ENCODE measurements at regions of chr14 and their contacts with region 1.

Region 1: GRCh38 chr14:77320238-77320935 is at the start of gene POMT2:
- DNase-seq: peak; percentile 92
- H3K4me3 Mint-ChIP-seq: peak within 1 kb of the TSS; percentile 92
- H3K27ac Mint-ChIP-seq: peak within 1 kb of the TSS; percentile 99
- H3K4me1 Mint-ChIP-seq: peaks cover 22% of the 10 kb centered on the region
- H3K27me3 Mint-ChIP-seq: no peaks in the 10 kb centered on the region
- total RNA-seq, gene POMT2: 20.5 and 22.1 TPM in 2 replicates

Region 2: DNA sequence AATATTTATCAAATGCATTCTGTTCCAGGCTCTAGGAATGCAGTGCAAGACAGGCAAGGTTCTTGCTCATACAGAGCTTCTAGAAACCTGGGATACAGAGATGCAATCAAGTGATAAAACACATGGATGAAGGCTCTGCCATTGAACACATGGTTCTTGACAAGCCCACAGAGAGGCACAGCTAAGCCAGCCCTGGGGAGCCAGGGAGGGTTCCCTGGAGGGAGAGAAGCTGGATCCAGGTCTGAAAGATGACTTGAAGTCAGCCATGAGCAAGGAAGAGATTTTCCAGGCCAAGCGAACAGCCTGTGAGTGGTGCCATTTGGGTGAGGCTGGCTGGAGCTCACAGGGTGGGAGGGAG is 358.1 kb before region 1 on chr14:
- intact Hi-C with region 1: loop called (anchors 5 kb)
- DNase-seq: no peak
- H3K4me3 Mint-ChIP-seq: peak overlapping the region; percentile 80
- H3K27ac Mint-ChIP-seq: peak overlapping the region; percentile 80
- H3K4me1 Mint-ChIP-seq: peaks cover 83% of the 10 kb centered on the region
- H3K27me3 Mint-ChIP-seq: peaks cover 26% of the 10 kb centered on the region

Region 3: DNA sequence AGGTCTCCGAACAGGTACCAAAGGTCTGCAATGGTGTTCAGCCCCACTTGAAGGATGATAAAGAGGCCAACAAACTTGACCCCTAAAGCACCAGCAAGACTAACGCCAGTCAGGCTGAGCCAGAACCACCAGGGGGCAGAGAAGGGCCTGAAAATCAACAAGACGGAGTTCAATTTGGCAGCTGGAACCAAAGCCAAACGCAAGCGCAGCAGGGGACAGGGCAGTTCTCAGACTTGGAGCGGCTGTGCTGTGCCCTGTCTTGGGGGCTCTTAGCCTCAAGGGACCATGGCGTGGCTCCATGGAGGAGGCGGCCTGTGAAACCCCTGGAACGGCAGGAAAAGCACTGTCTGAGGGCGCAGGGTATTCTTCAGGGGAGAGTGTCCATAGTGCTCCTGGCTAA is 19.3 kb before region 1 on chr14:
- intact Hi-C with region 1: loop called (anchors 1 kb)
- DNase-seq: peak; percentile 16
- H3K4me3 Mint-ChIP-seq: no peak overlapping the region
- H3K27ac Mint-ChIP-seq: no peak overlapping the region
- H3K4me1 Mint-ChIP-seq: peaks cover 24% of the 10 kb centered on the region
- H3K27me3 Mint-ChIP-seq: no peaks in the 10 kb centered on the region

Region 4: DNA sequence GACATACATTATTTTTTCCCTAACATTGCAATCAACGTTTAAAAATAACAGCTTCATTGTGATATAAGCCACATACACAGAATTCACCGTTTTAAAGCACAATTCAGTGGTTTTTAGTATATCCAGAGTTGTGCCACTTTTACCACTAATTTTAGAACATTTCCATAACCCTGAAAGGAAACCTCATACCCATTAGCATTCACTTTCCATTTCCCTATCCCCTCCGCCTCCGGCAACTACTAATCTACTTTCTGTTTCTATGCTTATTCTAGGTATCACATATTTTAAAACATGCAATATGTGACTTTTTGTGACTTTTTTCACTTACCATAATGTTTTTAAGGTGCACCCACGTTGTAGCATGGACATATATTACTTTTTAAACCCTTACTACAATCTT is 233.8 kb after region 1 on chr14:
- intact Hi-C with region 1: loop called (anchors 5 kb)
- DNase-seq: no peak
- H3K4me3 Mint-ChIP-seq: peak overlapping the region; percentile 45
- H3K27ac Mint-ChIP-seq: peak overlapping the region; percentile 47
- H3K4me1 Mint-ChIP-seq: peaks cover 17% of the 10 kb centered on the region
- H3K27me3 Mint-ChIP-seq: no peaks in the 10 kb centered on the region

Region 5: DNA sequence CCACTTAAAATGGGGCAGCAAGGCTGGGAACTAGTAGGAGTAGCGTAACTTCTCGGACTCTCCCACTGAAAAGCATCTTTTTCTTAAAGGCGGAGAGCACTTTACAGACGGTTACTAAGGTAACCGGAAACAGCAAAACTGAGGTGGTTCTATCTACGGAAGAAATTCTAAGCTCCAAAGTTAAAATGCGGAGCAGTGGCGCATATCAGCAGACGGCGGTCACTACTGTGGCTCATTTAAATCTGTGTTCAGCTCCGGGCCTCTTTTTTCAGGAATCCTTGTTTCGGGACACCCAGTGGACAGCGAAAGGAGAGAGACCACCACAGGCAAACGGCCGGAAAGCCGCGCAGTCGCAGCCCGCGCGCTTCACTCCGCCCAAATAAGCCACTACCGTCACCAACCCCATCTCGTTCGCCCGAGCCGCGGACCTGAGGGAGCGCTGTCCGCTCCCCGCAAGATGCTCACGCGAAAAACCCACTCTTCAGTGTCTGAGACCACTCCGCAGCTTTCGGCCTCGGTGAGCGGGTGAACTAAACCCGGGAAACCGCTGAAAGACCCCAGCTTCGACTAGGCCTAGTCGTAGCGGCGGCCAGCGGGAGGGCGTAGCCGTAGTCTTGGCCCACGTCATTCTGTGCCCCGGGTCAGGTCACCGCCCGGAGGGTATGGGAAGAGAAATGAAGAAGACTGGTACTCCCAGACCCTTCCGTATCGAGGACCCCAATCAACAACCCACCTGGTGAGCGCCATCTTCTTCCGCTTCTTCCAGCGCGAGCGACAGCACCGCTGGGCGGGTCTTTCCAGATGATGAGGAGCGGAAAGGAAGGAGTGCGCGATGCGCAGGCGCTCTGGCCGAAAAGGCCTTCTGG is 440.2 kb after region 1 on chr14 and contains the start of gene SNW1:
- intact Hi-C with region 1: loop called (anchors 1 kb)
- DNase-seq: peak; percentile 91
- H3K4me3 Mint-ChIP-seq: peak within 1 kb of the TSS; percentile 96
- H3K27ac Mint-ChIP-seq: peak within 1 kb of the TSS; percentile 97
- H3K4me1 Mint-ChIP-seq: peaks cover 38% of the 10 kb centered on the region
- H3K27me3 Mint-ChIP-seq: peaks cover 6% of the 10 kb centered on the region
- total RNA-seq, gene SNW1: 112 and 118 TPM in 2 replicates